GM12878 (cell line): ENCODE measurements at regions of chr4 and their contacts with region 1.

Region 1: GRCh38 chr4:89254847-89255246 is 52.8 kb downstream of the GPRIN3 start:
- DNase-seq: no peak
- ATAC-seq: peak; percentile 76
- H3K4me3 ChIP-seq: no peak overlapping the region
- H3K27ac ChIP-seq: no peak overlapping the region
- H3K4me1 ChIP-seq: no peaks in the 10 kb centered on the region
- H3K27me3 ChIP-seq: no peaks in the 10 kb centered on the region; a peak in 1 of 4 replicates
- CTCF ChIP-seq: peak; percentile 66 to 75 (median 72)
- EP300 ChIP-seq: no peak
- POLR2A ChIP-seq: no peak
- RAD21 ChIP-seq: peak; percentile 57

Region 2: GRCh38 chr4:88533937-88534750 is 720.7 kb before region 1 on chr4:
- CTCF ChIA-PET with region 1: no interaction called
- POLR2A ChIA-PET with region 1: no interaction called
- RAD21 ChIA-PET with region 1: no interaction called
- SMC1A ChIA-PET with region 1: no interaction called
- in situ Hi-C with region 1: no loop called
- intact Hi-C with region 1: no loop called
- DNase-seq: no peak
- ATAC-seq: no peak
- H3K4me3 ChIP-seq: no peak overlapping the region
- H3K27ac ChIP-seq: no peak overlapping the region
- H3K4me1 ChIP-seq: no peaks in the 10 kb centered on the region
- H3K27me3 ChIP-seq: no peaks in the 10 kb centered on the region
- CTCF ChIP-seq: no peak
- EP300 ChIP-seq: no peak
- POLR2A ChIP-seq: no peak
- RAD21 ChIP-seq: no peak

Region 3: GRCh38 chr4:89242864-89243732 is 11.7 kb before region 1 on chr4:
- CTCF ChIA-PET with region 1: interaction called, 10 read pairs
- POLR2A ChIA-PET with region 1: interaction called, 3 read pairs
- RAD21 ChIA-PET with region 1: no interaction called
- SMC1A ChIA-PET with region 1: interaction called, 6 read pairs
- in situ Hi-C with region 1: no loop called
- intact Hi-C with region 1: no loop called
- DNase-seq: no peak
- ATAC-seq: no peak; the same call in 1 of the 3 replicates
- H3K4me3 ChIP-seq: no peak overlapping the region
- H3K27ac ChIP-seq: no peak overlapping the region
- H3K4me1 ChIP-seq: no peaks in the 10 kb centered on the region
- H3K27me3 ChIP-seq: no peaks in the 10 kb centered on the region
- CTCF ChIP-seq: no peak
- EP300 ChIP-seq: no peak
- POLR2A ChIP-seq: no peak
- RAD21 ChIP-seq: no peak

Region 4: DNA sequence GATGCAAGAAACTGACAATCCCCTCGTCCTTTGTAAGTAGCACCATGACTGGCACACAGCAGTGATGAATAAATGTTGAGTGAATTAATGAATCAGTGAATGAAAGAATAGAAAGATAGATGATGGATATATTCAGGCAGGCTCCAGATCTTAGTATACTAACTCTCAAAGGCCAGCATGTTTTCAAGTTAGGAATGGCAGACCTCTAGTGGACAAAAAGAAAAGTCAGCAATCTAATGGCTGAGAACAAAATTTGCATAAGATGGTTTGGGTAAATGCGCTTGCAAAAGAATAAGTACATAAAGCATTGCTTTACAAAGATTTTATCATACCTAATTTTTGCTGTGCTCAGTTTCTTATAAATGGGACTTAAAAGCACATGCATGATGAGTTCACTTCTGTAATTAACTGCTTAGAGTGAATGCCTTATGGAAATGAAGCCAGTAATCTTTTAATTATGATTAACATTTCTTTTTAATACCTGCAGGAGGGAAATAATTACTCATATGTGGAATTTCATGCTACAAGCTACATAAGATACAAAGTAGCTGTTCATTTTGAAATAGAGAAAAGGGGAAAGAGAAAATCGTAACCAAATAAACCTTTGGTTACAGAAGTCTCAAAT is 179.6 kb after region 1 on chr4:
- CTCF ChIA-PET with region 1: interaction called, 12 read pairs
- POLR2A ChIA-PET with region 1: no interaction called
- RAD21 ChIA-PET with region 1: interaction called, 3 read pairs
- SMC1A ChIA-PET with region 1: no interaction called
- in situ Hi-C with region 1: loop called (anchors 10 kb)
- intact Hi-C with region 1: loop called (anchors 2 kb)
- DNase-seq: no peak
- ATAC-seq: peak; percentile 71
- H3K4me3 ChIP-seq: no peak overlapping the region
- H3K27ac ChIP-seq: no peak overlapping the region
- H3K4me1 ChIP-seq: no peaks in the 10 kb centered on the region
- H3K27me3 ChIP-seq: no peaks in the 10 kb centered on the region; a peak in 1 of 4 replicates
- CTCF ChIP-seq: peak; percentile 62 to 70 (median 67)
- EP300 ChIP-seq: no peak
- POLR2A ChIP-seq: no peak
- RAD21 ChIP-seq: peak; percentile 77

Region 5: GRCh38 chr4:89906777-89907521 is 652.1 kb after region 1 on chr4:
- CTCF ChIA-PET with region 1: no interaction called
- POLR2A ChIA-PET with region 1: no interaction called
- RAD21 ChIA-PET with region 1: no interaction called
- SMC1A ChIA-PET with region 1: no interaction called
- in situ Hi-C with region 1: no loop called
- intact Hi-C with region 1: loop called (anchors 5 kb)
- DNase-seq: no peak
- ATAC-seq: peak; percentile 79
- H3K4me3 ChIP-seq: no peak overlapping the region
- H3K27ac ChIP-seq: no peak overlapping the region
- H3K4me1 ChIP-seq: no peaks in the 10 kb centered on the region
- H3K27me3 ChIP-seq: no peaks in the 10 kb centered on the region
- CTCF ChIP-seq: no peak
- EP300 ChIP-seq: peak; percentile 72 to 83; a peak in 2 of 4 replicates
- POLR2A ChIP-seq: no peak
- RAD21 ChIP-seq: no peak